ENCODE measurements at regions of chr14 and their contacts with region 1.

Region 1: GRCh38 chr14:50542941-50543418 is 10.6 kb upstream of the MAP4K5 start:
- DNase-seq: peak; percentile 61
- ATAC-seq: peak; percentile 79
- H3K4me3 ChIP-seq: no peak overlapping the region
- H3K27ac ChIP-seq: no peak overlapping the region
- H3K4me1 ChIP-seq: no peaks in the 10 kb centered on the region
- H3K27me3 ChIP-seq: no peaks in the 10 kb centered on the region; the same call in 1 of the 2 replicates
- CTCF ChIP-seq: peak; percentile 56
- POLR2A ChIP-seq: no peak
- RAD21 ChIP-seq: peak; percentile 58

Region 2: GRCh38 chr14:50778721-50779483 is 235.9 kb after region 1 on chr14:
- CTCF ChIA-PET with region 1: interaction called, 6 read pairs
- POLR2A ChIA-PET with region 1: no interaction called
- dilution Hi-C with region 1: no loop called
- in situ Hi-C with region 1: loop called (anchors 5 kb)
- intact Hi-C with region 1: loop called (anchors 1 kb)
- DNase-seq: peak; percentile 76
- ATAC-seq: no peak
- H3K4me3 ChIP-seq: no peak overlapping the region
- H3K27ac ChIP-seq: no peak overlapping the region
- H3K4me1 ChIP-seq: peaks cover 11% of the 10 kb centered on the region
- H3K27me3 ChIP-seq: no peaks in the 10 kb centered on the region
- CTCF ChIP-seq: no peak
- POLR2A ChIP-seq: no peak
- RAD21 ChIP-seq: no peak